ENCODE measurements at regions of chr18 and their contacts with region 1.

Region 1: GRCh38 chr18:70636991-70637390 is 348.1 kb downstream of the SOCS6 start:
- DNase-seq: no peak
- ATAC-seq: no peak
- H3K4me3 ChIP-seq: no peak overlapping the region
- H3K4me3 Mint-ChIP-seq: no peak overlapping the region
- H3K27ac ChIP-seq: no peak overlapping the region
- H3K27ac Mint-ChIP-seq: no peak overlapping the region
- H3K4me1 ChIP-seq: no peaks in the 10 kb centered on the region
- H3K4me1 Mint-ChIP-seq: no peaks in the 10 kb centered on the region
- H3K27me3 ChIP-seq: no peaks in the 10 kb centered on the region
- H3K27me3 Mint-ChIP-seq: no peaks in the 10 kb centered on the region
- CTCF ChIP-seq: no peak

Region 2: GRCh38 chr18:70650878-70651277 is 13.9 kb after region 1 on chr18:
- CTCF ChIA-PET with region 1: no interaction called
- POLR2A ChIA-PET with region 1: no interaction called
- intact Hi-C with region 1: loop called (anchors 1 kb)
- DNase-seq: no peak
- ATAC-seq: no peak
- H3K4me3 ChIP-seq: no peak overlapping the region
- H3K4me3 Mint-ChIP-seq: no peak overlapping the region
- H3K27ac ChIP-seq: no peak overlapping the region
- H3K27ac Mint-ChIP-seq: no peak overlapping the region
- H3K4me1 ChIP-seq: no peaks in the 10 kb centered on the region
- H3K4me1 Mint-ChIP-seq: no peaks in the 10 kb centered on the region
- H3K27me3 ChIP-seq: no peaks in the 10 kb centered on the region
- H3K27me3 Mint-ChIP-seq: no peaks in the 10 kb centered on the region
- CTCF ChIP-seq: no peak

Region 3: GRCh38 chr18:71238974-71239624 is 602.1 kb after region 1 on chr18:
- CTCF ChIA-PET with region 1: no interaction called
- POLR2A ChIA-PET with region 1: no interaction called
- intact Hi-C with region 1: no loop called
- DNase-seq: no peak
- ATAC-seq: no peak
- H3K4me3 ChIP-seq: no peak overlapping the region
- H3K4me3 Mint-ChIP-seq: no peak overlapping the region
- H3K27ac ChIP-seq: no peak overlapping the region
- H3K27ac Mint-ChIP-seq: no peak overlapping the region
- H3K4me1 ChIP-seq: no peaks in the 10 kb centered on the region
- H3K4me1 Mint-ChIP-seq: no peaks in the 10 kb centered on the region
- H3K27me3 ChIP-seq: no peaks in the 10 kb centered on the region
- H3K27me3 Mint-ChIP-seq: no peaks in the 10 kb centered on the region
- CTCF ChIP-seq: no peak